IMR-90 (cell line): ENCODE measurements at regions of chr3 and their contacts with region 1.

Region 1: GRCh38 chr3:67647390-67647878 is 7.0 kb downstream of the SUCLG2 start:
- DNase-seq: peak; percentile 99
- ATAC-seq: peak; percentile 90
- H3K4me3 ChIP-seq: no peak overlapping the region
- H3K27ac ChIP-seq: peak overlapping the region; percentile 9; the same call in 1 of the 2 replicates
- H3K4me1 ChIP-seq: peaks cover 15% of the 10 kb centered on the region
- H3K27me3 ChIP-seq: no peaks in the 10 kb centered on the region
- CTCF ChIP-seq: no peak
- POLR2A ChIP-seq: no peak
- RAD21 ChIP-seq: peak; percentile 32

Region 2: DNA sequence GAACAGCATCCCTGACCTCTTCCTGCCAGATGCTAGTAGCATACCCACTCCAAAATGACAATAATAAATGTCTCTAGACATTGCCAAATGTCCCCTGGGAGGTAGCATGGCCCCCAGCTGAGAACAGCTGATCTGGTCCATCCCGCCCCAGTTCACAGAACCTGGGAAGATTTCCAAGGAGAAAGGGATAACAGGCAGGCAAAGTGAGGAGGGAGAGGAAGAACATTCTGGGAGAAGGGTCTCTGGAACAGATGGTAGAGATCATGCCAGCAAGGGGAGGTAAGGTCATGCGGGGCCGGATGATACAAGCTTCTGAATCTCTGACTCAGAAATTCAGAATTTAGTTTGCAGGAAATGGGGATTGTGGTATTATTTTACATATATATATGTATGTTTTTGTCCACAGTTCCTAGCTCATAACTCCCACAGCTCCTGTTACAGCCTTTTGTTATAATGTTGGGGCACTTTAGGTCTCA is 185.7 kb before region 1 on chr3:
- CTCF ChIA-PET with region 1: no interaction called
- POLR2A ChIA-PET with region 1: no interaction called
- dilution Hi-C with region 1: no loop called
- in situ Hi-C with region 1: no loop called
- intact Hi-C with region 1: loop called (anchors 5 kb)
- DNase-seq: peak; percentile 63
- ATAC-seq: peak; percentile 63
- H3K4me3 ChIP-seq: no peak overlapping the region
- H3K27ac ChIP-seq: peak overlapping the region; percentile 19; the same call in 1 of the 2 replicates
- H3K4me1 ChIP-seq: peaks cover 16% of the 10 kb centered on the region
- H3K27me3 ChIP-seq: no peaks in the 10 kb centered on the region
- CTCF ChIP-seq: no peak
- POLR2A ChIP-seq: no peak
- RAD21 ChIP-seq: no peak